Heart right ventricle (tissue), 16 donors: ENCODE measurements at regions of chr15 and their contacts with region 1.

Region 1: DNA sequence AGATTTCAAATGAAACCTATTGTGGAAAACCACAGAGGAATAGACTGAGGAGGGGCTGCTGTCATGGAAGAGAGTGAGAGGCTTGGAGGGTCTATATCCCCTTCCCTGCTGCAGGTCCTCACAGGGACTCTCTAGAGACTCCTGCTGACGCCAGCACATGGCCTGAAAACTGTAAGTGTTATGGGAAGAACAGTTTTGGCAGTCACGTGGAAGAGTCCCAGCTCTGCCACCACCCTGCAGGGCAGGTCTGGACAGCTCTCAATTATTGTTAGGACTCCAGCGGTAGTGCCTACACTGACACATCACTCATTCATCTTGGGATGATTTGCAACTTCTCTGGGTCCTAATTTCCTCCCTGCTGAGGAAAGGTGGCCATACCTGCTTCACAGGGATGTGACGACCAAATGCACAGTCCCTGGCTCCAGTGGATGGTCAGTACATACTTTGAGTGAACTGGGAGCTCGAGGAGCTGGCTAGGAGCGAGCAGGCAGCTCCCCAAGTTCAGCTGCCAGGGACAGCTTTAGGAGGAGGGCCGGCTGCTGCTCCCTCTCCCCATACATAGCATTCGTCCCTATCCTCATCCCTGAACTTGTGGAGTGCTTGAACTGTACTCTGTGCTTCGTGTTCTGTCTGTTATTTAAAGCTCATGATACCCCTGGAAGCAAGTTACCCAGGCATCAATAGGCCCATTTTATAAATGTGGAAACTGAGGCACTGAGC is 49.2 kb downstream of the CTXND1 start:
- DNase-seq: no peak
- ATAC-seq: peak in 1 of 8 donors; percentile 29
- H3K4me3 ChIP-seq: no peak overlapping the region
- H3K27ac ChIP-seq: no peak overlapping the region
- H3K4me1 ChIP-seq: no peaks in the 10 kb centered on the region
- H3K27me3 ChIP-seq: peaks cover 0 to 27% (median 5%) of the 10 kb centered on the region in 7 donors
- CTCF ChIP-seq: no peak

Region 2: GRCh38 chr15:80264031-80264430 is 61.2 kb after region 1 on chr15:
- intact Hi-C with region 1: loop called in 1 of 10 experiments (anchors 10 kb)
- DNase-seq: no peak
- ATAC-seq: no peak
- H3K4me3 ChIP-seq: no peak overlapping the region
- H3K27ac ChIP-seq: no peak overlapping the region
- H3K4me1 ChIP-seq: no peaks in the 10 kb centered on the region
- H3K27me3 ChIP-seq: peaks cover 0 to 52% (median 12%) of the 10 kb centered on the region in 7 donors
- CTCF ChIP-seq: no peak

Region 3: GRCh38 chr15:80401456-80401855 is 198.7 kb after region 1 on chr15:
- intact Hi-C with region 1: no loop called
- DNase-seq: no peak
- ATAC-seq: no peak
- H3K4me3 ChIP-seq: no peak overlapping the region
- H3K27ac ChIP-seq: no peak overlapping the region
- H3K4me1 ChIP-seq: peaks cover 0 to 12% (median 7%) of the 10 kb centered on the region in 9 donors
- H3K27me3 ChIP-seq: peaks cover 0 to 59% (median 19%) of the 10 kb centered on the region in 7 donors
- CTCF ChIP-seq: no peak